Transverse colon (tissue), 4 donors: ENCODE measurements at regions of chr2 and their contacts with region 1.

Region 1: GRCh38 chr2:161400076-161400475 is 16.0 kb upstream of the TBR1 start:
- DNase-seq: no peak
- H3K4me3 ChIP-seq: no peak overlapping the region
- H3K27ac ChIP-seq: no peak overlapping the region
- H3K4me1 ChIP-seq: no peaks in the 10 kb centered on the region
- H3K27me3 ChIP-seq: no peaks in the 10 kb centered on the region
- CTCF ChIP-seq: no peak
- EP300 ChIP-seq: no peak
- POLR2A ChIP-seq: no peak

Region 2: GRCh38 chr2:160054984-160055725 is 1344.9 kb before region 1 on chr2:
- in situ Hi-C with region 1: no loop called
- intact Hi-C with region 1: loop called (anchors 5 kb)
- DNase-seq: no peak
- H3K4me3 ChIP-seq: no peak overlapping the region
- H3K27ac ChIP-seq: peak overlapping the region in 1 of 4 donors; percentile 14
- H3K4me1 ChIP-seq: peaks cover 0 to 11% (median 0%) of the 10 kb centered on the region in 4 donors
- H3K27me3 ChIP-seq: no peaks in the 10 kb centered on the region
- CTCF ChIP-seq: no peak
- EP300 ChIP-seq: no peak
- POLR2A ChIP-seq: no peak

Region 3: DNA sequence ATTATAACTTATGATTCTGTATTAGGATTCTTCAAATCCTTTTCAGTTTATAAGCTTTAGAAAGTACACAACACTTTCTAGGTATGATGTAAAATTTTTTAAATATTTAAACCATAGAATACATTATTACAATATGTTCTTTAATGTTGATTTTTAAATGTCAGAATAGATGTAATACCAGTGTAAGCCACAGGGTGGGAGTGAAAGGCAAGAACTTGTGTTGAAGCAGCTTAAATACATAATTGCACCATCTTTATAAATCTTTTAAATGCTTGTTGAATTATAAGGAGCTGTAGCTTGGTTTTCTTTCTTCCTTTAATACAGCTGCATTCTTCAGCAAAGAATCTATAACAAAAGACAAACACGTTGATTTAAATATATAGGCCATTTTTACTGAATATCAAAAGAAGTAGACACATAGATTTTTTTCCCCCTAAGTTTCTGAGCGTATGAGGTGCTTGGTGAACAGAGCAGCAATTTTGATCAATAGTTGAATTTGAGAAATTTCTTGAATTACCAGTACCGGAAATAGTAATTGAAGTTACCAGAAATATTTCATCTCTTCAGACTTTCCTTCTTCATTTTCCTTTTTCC is 176.8 kb before region 1 on chr2:
- in situ Hi-C with region 1: no loop called
- intact Hi-C with region 1: no loop called
- DNase-seq: no peak
- H3K4me3 ChIP-seq: no peak overlapping the region
- H3K27ac ChIP-seq: no peak overlapping the region
- H3K4me1 ChIP-seq: peaks cover 0 to 11% (median 0%) of the 10 kb centered on the region in 4 donors
- H3K27me3 ChIP-seq: no peaks in the 10 kb centered on the region
- CTCF ChIP-seq: peak; percentile 67 to 82 (median 70)
- EP300 ChIP-seq: no peak
- POLR2A ChIP-seq: no peak

Region 4: GRCh38 chr2:161307676-161308075 is 92.4 kb before region 1 on chr2:
- in situ Hi-C with region 1: no loop called
- intact Hi-C with region 1: no loop called
- DNase-seq: no peak
- H3K4me3 ChIP-seq: peak overlapping the region; percentile 49 to 79 (median 70)
- H3K27ac ChIP-seq: peak overlapping the region; percentile 78 to 89 (median 86)
- H3K4me1 ChIP-seq: peaks cover 0 to 19% (median 15%) of the 10 kb centered on the region in 4 donors
- H3K27me3 ChIP-seq: no peaks in the 10 kb centered on the region
- CTCF ChIP-seq: no peak
- EP300 ChIP-seq: no peak
- POLR2A ChIP-seq: no peak

Region 5: DNA sequence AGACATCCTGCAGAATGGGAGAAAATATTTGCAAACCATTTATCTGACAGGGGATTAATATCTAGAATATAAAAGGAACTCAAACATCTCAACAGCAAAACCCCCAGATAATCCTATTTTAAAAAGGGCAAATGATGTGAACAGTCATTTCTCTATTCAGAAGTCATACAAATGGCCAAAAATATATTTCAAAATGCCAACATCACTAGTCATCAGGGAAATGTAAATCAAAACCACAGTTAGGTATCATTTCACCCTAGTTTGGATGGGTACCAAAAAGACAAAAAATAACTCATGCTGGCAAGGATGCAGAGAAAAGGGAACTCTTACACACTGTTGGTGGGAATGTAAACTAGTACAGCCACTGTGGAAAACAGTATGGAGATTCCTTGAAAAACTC is 86.0 kb after region 1 on chr2:
- in situ Hi-C with region 1: no loop called
- intact Hi-C with region 1: no loop called
- DNase-seq: no peak
- H3K4me3 ChIP-seq: no peak overlapping the region
- H3K27ac ChIP-seq: no peak overlapping the region
- H3K4me1 ChIP-seq: no peaks in the 10 kb centered on the region
- H3K27me3 ChIP-seq: no peaks in the 10 kb centered on the region
- CTCF ChIP-seq: no peak
- EP300 ChIP-seq: no peak
- POLR2A ChIP-seq: no peak

Region 6: GRCh38 chr2:162874412-162874811 is 1474.3 kb after region 1 on chr2:
- in situ Hi-C with region 1: no loop called
- intact Hi-C with region 1: loop called (anchors 10 kb)
- DNase-seq: no peak
- H3K4me3 ChIP-seq: no peak overlapping the region
- H3K27ac ChIP-seq: no peak overlapping the region
- H3K4me1 ChIP-seq: no peaks in the 10 kb centered on the region
- H3K27me3 ChIP-seq: no peaks in the 10 kb centered on the region
- CTCF ChIP-seq: no peak
- EP300 ChIP-seq: no peak
- POLR2A ChIP-seq: no peak